Panc1 (cell line): ENCODE measurements at regions of chr16 and their contacts with region 1.

Region 1: GRCh38 chr16:75402821-75403475 is 30.4 kb downstream of the CFDP1 start:
- DNase-seq: no peak
- ATAC-seq: no peak
- H3K4me3 ChIP-seq: no peak overlapping the region
- H3K27ac ChIP-seq: no peak overlapping the region
- H3K4me1 ChIP-seq: no peaks in the 10 kb centered on the region
- H3K27me3 ChIP-seq: no peaks in the 10 kb centered on the region
- CTCF ChIP-seq: peak; percentile 68

Region 2: GRCh38 chr16:75198135-75198600 is 204.8 kb before region 1 on chr16:
- CTCF ChIA-PET with region 1: no interaction called
- POLR2A ChIA-PET with region 1: no interaction called
- in situ Hi-C with region 1: no loop called
- intact Hi-C with region 1: loop called (anchors 2 kb)
- DNase-seq: no peak
- ATAC-seq: no peak; the same call in 1 of the 2 replicates
- H3K4me3 ChIP-seq: 0 out of 4 replicates have a peak overlapping the region, but pooled peaks of 1 of the 2 experiments have one; percentile 1
- H3K27ac ChIP-seq: no peak overlapping the region
- H3K4me1 ChIP-seq: no peaks in the 10 kb centered on the region
- H3K27me3 ChIP-seq: no peaks in the 10 kb centered on the region
- CTCF ChIP-seq: no peak